Activated T-helper 2 cell treated with anti-CD3 and anti-CD28 coated beads, Interferon-gamma antibody, Interleukin-2, Interleukin-4, amounts not matched to agents 10 μg/mL and 5 μg/mL and 100 μg/mL, durations not matched to agents 14 hours and 24 hours and 36 hours (primary cell): ENCODE measurements at regions of chr12 and their contacts with region 1.

Region 1: GRCh38 chr12:79274501-79275064 is 410.0 kb downstream of the SYT1 start:
- DNase-seq: no peak
- H3K4me3 Mint-ChIP-seq: no peak overlapping the region
- H3K27ac Mint-ChIP-seq: no peak overlapping the region
- H3K4me1 Mint-ChIP-seq: no peaks in the 10 kb centered on the region
- H3K27me3 Mint-ChIP-seq: no peaks in the 10 kb centered on the region

Region 2: DNA sequence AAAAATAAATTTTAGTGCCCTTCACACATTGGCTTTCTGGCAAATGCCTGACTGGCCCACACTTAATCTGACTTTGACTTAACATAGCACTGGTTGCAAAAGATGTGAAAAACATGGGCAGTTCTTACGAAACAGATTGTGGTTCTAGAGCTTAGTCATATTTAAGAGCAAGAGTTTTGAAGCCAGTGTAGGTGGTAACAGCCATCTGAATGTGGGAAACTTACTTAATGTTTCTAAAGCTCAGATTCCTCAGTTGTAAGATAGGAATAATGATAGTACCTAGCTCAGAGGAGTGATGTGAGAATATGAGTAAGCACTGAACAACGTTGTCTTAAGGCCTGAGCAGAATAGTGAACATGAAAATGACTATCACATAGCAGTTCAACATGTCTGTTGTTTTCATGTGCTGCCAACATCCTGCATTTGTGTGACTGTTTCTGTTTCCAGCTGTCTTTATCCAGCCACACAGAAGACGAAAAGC is 147.3 kb before region 1 on chr12:
- intact Hi-C with region 1: no loop called
- DNase-seq: no peak
- H3K4me3 Mint-ChIP-seq: no peak overlapping the region
- H3K27ac Mint-ChIP-seq: no peak overlapping the region
- H3K4me1 Mint-ChIP-seq: peaks cover 6% of the 10 kb centered on the region
- H3K27me3 Mint-ChIP-seq: no peaks in the 10 kb centered on the region

Region 3: GRCh38 chr12:79725841-79726386 is 451.3 kb after region 1 on chr12:
- intact Hi-C with region 1: loop called (anchors 5 kb)
- DNase-seq: no peak
- H3K4me3 Mint-ChIP-seq: no peak overlapping the region
- H3K27ac Mint-ChIP-seq: no peak overlapping the region
- H3K4me1 Mint-ChIP-seq: no peaks in the 10 kb centered on the region
- H3K27me3 Mint-ChIP-seq: peaks cover 8% of the 10 kb centered on the region